Esophagus muscularis mucosa (tissue), 4 donors: ENCODE measurements at regions of chr17 and their contacts with region 1.

Region 1: GRCh38 chr17:73429440-73430164 is 117.8 kb upstream of the CDC42EP4 start:
- DNase-seq: peak; percentile 94
- H3K4me3 ChIP-seq: peak overlapping the region in 1 of 4 donors; percentile 30
- H3K27ac ChIP-seq: no peak overlapping the region
- H3K4me1 ChIP-seq: peaks cover 5 to 18% (median 15%) of the 10 kb centered on the region in 4 donors
- H3K27me3 ChIP-seq: peaks cover 0 to 22% (median 0%) of the 10 kb centered on the region in 4 donors
- CTCF ChIP-seq: peak; percentile 94 to 97 (median 94)
- EP300 ChIP-seq: no peak
- POLR2A ChIP-seq: no peak

Region 2: DNA sequence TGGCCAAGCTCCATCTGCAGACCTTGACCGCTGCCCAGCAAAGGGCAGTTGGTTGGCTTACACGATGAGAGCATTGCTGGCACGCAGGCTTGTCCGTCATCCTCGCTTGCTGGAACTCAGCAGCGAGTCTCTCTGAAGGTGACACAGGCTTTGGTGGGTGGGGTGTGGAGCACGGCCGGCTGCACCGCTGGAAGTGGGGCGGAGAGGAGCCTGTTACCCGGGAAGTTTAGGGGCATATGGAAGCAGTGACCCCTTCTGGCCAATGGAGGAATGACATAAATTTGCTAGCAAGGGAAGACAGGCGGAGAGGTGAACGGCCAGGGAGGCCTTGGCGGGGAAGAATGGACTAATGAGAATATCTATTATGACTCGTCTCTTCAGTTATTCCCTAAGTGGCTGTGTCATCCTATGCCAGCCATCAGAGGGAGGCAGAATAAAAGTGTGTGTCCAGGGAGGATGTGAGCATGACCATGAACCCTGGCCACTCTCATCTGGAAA is 280.5 kb after region 1 on chr17:
- intact Hi-C with region 1: loop called (anchors 5 kb)
- DNase-seq: no peak
- H3K4me3 ChIP-seq: no peak overlapping the region
- H3K27ac ChIP-seq: no peak overlapping the region
- H3K4me1 ChIP-seq: peaks cover 0 to 7% (median 2%) of the 10 kb centered on the region in 4 donors
- H3K27me3 ChIP-seq: peaks cover 0 to 86% (median 0%) of the 10 kb centered on the region in 4 donors
- CTCF ChIP-seq: peak; percentile 52 to 68 (median 59)
- EP300 ChIP-seq: no peak
- POLR2A ChIP-seq: no peak

Region 3: GRCh38 chr17:73956669-73957465 is 527.3 kb after region 1 on chr17:
- intact Hi-C with region 1: loop called (anchors 10 kb)
- DNase-seq: no peak
- H3K4me3 ChIP-seq: no peak overlapping the region
- H3K27ac ChIP-seq: no peak overlapping the region
- H3K4me1 ChIP-seq: peaks cover 4 to 13% (median 12%) of the 10 kb centered on the region in 4 donors
- H3K27me3 ChIP-seq: peaks cover 0 to 56% (median 13%) of the 10 kb centered on the region in 4 donors
- CTCF ChIP-seq: peak in 2 of 3 experiments; percentile 9 to 23
- EP300 ChIP-seq: no peak
- POLR2A ChIP-seq: no peak

Region 4: DNA sequence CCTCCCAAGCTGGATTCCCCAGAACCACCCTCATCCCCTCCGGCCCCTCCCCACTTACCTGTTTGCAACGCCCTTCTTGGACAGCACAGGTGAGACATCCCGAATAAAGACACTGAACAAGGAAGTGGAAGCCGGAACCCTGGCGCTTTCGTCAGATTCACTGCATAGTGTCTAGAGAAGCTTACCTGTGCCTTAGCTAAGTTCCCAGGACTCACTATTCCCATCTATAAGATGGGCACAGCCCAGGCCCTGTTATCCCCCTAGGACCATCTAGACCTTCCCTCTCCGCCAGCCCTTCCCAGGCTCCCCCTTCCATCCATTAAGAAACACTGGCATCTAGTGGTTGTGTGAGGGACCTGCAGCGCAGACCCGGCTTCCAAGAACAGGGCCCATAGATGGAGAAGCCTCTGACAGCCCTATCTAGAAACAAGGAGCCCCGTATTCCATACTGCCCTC is 747.0 kb after region 1 on chr17:
- intact Hi-C with region 1: loop called (anchors 2 kb)
- DNase-seq: no peak
- H3K4me3 ChIP-seq: no peak overlapping the region
- H3K27ac ChIP-seq: no peak overlapping the region
- H3K4me1 ChIP-seq: no peaks in the 10 kb centered on the region
- H3K27me3 ChIP-seq: peaks cover 0 to 66% (median 4%) of the 10 kb centered on the region in 4 donors
- CTCF ChIP-seq: peak; percentile 71 to 89 (median 76)
- EP300 ChIP-seq: no peak
- POLR2A ChIP-seq: no peak